ENCODE measurements at regions of chr18 and their contacts with region 1.

Region 1: DNA sequence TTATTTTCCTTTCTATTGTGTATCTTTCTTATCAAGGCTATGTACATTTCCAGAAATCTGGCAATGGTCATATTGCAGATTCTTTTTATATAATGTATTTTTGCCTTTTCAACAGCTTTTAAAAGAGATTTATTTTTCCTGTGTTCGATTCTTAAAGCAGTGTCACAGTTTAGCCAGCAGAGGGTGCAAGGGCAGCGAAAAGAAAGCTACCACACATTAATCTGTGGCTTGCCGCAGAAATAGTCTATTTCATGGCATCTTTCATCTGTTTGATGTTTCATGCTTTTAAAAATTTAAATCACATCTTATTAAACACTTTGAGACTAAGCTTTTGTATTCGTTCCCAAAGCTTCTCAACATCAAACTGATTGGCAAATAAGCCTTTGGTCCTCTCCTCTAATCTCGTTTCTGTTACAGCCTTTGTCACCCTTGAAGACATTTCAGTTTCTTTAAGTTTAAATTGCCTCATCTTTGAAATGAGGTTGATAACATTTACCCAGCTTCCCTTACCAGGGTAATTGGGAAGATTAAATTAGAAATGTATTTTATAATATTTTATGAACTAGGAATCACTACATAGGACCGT is 73.3 kb downstream of the PIK3C3 start:
- DNase-seq: peak; percentile 35
- CTCF ChIP-seq: peak; percentile 68

Region 2: GRCh38 chr18:42011053-42011452 is 17.3 kb before region 1 on chr18:
- CTCF ChIA-PET with region 1: interaction called, 32 read pairs
- POLR2A ChIA-PET with region 1: no interaction called
- DNase-seq: peak; percentile 18
- CTCF ChIP-seq: no peak

Region 3: DNA sequence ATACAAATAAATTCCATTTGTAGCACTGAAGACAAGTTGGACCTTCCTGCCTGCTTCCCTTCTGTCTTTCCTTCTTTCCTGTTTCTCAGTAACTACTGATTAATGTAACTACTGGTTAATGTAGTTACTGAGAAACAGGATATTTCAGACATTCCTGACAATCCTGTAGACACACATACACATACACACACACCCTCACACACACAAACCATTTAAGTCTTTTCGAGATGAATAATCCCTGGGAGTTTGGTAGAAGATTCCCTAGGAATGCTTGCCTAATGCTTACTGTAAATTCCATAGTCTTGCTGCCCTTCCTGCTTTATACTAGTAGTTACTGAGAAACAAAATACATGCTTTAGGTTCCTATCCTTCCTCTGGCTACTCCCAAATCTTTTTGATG is 10.6 kb after region 1 on chr18:
- CTCF ChIA-PET with region 1: interaction called, 17 read pairs
- POLR2A ChIA-PET with region 1: no interaction called
- DNase-seq: no peak
- CTCF ChIP-seq: no peak

Region 4: DNA sequence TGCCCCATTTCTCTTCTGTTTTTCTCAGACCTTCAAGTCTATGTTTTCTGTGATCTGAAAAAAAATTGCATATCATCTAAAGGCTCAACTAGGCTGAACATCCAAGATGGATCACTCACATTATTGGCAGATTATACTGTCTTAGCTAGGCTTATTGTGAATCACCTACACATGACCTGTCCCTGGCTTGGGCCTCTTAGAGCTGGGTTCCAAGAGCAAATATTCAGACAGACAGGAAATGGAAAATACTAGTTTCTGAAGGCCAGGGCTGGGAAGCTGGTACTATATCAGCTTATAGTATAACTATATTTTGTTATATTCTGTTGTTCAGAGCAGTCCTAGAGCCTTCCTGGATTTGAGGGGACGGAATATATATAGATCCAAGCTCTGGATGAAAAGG is 17.0 kb after region 1 on chr18:
- CTCF ChIA-PET with region 1: interaction called, 17 read pairs
- POLR2A ChIA-PET with region 1: no interaction called
- DNase-seq: no peak
- CTCF ChIP-seq: no peak

Region 5: GRCh38 chr18:42092848-42093247 is 64.5 kb after region 1 on chr18:
- CTCF ChIA-PET with region 1: no interaction called
- POLR2A ChIA-PET with region 1: no interaction called
- DNase-seq: no peak
- CTCF ChIP-seq: no peak